GM13976 (cell line): ENCODE measurements at regions of chr17 and their contacts with region 1.

Region 1: DNA sequence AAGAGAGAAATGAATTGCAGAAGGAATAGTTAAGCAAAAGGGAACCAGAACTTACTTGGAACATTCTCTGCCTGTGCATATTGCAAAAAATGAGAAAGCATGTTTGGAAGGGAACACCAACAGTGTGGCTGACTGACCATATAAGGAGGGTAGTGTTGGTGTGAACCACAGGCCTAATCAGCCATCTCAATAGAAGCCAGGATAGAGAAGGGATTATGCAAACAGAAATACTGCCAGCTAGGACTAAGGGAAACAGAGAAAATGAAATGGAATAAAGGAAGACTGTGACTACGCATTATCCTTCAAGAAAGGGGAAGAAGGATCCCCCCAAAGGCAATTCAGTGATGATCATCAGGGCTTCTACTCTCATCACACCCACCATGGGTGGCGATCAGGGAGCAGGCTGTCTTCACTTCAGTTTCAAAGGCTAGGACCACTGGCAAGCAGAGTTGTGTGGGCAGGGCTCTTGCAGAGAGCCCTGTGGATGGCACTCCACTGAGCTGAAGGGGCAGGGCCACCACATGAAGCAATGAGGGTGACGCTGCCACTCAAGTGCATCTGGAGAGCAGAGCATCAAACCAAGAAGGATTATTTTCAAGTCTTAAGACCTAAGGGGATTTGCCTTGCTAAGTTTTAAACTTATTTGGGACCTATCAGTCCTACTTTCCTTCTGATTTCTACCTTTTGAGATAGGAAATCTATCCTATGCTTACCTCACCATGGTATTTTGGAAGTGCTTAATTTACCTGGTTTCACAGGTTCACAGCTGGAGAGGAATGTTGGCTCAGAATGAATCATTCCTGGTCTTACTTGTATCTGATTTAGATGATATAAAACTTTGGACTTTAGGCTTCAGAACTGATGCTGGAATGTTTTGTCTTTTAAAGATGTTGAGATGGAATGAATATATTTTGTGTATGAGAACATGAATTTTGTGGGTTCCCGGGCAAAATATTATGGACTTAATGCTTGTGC is 140.5 kb downstream of the SSH2 start:
- DNase-seq: no peak
- CTCF ChIP-seq: no peak

Region 2: DNA sequence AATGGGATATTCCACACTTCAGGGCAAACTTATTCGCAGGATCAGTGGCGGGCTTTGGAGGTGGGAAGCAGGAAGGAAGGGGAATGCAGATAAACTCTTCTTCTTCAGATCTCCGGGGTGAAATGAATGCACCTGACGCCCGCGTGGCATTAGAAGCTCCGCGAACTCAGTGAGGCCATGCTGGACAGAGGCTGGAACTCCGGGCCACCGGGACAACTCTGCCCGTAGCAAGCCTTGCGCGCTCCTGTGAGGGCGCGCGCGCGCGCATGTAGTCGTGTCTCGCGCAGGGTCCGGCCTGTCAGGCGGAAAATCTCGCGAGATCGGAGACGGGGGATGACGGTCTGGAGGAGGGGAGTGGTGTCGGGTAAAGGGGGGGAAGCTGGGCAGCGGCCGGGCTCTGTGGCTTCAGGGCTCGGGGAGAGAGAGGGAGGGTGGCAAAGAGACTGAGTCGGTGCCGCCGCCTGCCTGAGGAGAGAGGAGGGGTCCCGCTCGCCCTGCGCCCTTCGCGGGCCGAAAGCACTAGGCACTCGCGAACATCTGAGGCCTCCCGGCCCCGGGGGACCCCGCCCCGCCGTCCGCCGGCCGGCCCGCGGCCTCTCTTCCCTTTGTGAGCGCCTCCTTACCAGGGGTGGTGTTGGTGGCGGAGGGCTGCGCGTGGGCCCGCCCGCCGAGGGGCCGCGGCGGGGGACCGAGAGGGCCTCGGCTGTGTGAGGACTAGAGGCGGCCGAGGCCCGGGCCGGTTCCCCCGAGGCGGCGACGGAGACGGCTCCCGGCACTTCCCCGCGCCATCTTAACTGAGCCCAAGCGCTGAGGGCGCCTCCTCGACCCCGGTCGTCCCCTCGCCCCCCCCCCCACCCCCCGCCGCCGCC is 399.3 kb before region 1 on chr17 and contains the start of gene TAOK1:
- in situ Hi-C with region 1: loop called (anchors 25 kb)
- DNase-seq: peak; percentile 98
- CTCF ChIP-seq: no peak

Region 3: DNA sequence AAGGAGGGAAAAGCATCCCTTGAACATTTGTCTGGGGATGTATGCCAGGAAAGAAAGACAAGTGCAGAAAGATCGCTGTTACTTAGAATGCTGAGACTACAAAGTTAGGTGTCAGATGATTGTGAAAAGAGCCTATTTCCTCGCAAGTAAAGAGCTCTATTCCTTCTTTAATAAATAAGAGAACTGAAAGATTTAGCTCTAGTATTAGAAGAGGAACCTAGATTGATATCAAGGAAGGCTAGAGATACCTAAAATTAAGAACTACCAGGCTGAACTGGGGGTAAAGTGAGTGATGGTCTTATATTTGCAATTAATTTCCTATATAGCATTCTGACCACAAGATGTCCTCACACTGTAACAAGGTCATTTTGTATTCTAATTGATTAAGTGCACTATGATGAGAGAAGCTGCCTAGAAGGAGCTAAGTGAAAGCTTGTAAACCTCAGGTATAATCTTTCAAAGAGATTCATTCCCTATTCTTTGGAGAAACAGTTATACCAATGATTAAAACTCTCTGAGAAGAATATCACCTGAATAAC is 78.2 kb after region 1 on chr17:
- in situ Hi-C with region 1: no loop called
- DNase-seq: no peak
- CTCF ChIP-seq: no peak